Gastrocnemius medialis (tissue), 4 donors: ENCODE measurements at regions of chr4 and their contacts with region 1.

Region 1: GRCh38 chr4:159102622-159103383 is at the start of gene RAPGEF2:
- DNase-seq: peak; percentile 90 to 92
- ATAC-seq: peak; percentile 93
- H3K4me3 ChIP-seq: peak within 1 kb of the TSS; percentile 67 to 97 (median 93)
- H3K27ac ChIP-seq: peak within 1 kb of the TSS; percentile 93 to 96 (median 95)
- H3K4me1 ChIP-seq: peaks cover 35 to 43% of the 10 kb centered on the region in 2 donors
- H3K27me3 ChIP-seq: no peaks in the 10 kb centered on the region
- CTCF ChIP-seq: peak in 1 of 5 experiments; percentile 10
- POLR2A ChIP-seq: peak; percentile 95 to 98
- total RNA-seq, gene RAPGEF2: 32.9 to 42.3 (median 38.7) TPM

Region 2: DNA sequence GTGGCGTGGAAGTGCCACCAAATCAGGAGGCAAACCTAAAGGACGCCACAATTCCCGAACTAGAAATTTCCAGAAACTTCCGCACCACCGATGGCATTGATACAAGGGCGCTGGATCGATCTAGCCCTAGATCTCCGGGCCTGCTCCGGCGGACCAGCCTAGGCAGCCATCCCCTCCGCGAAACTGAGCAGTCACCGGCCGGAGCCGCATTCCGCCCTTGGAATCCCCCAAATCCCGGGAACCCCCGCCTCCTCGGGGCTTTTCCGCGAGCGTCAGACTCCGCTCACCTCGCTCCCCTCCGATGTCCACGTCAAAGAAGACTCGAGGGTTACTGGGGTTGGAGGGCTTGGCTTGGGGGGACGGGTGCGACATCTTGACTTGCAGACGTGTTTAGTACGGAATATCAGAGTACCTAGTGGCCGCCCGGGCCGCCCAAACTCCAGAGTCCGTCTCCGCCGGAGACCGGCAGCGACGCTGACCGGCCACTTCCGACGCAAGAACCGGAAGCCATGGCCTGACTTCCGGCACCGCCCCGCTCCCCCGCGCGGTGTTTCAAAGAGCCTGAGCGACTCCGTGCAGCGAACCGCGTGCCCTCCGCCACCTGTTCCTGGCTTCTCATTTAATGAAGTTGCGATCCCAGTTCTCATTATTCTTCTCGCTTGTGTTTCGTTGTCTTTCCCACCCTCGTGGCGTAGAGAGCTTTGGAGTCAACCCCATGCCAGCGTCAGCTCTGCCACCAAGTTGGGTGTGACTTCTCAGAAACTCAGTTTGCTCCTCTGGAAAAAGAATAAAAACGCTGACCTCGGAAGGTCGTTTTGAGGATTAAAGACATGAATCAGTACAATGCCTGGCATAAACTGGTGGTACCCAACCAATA is 379.6 kb before region 1 on chr4 and contains the start of gene PPID:
- in situ Hi-C with region 1: loop called in 1 of 4 experiments (anchors 10 kb)
- intact Hi-C with region 1: loop called (anchors 5 kb)
- DNase-seq: peak; percentile 68 to 81
- ATAC-seq: peak; percentile 92 to 95
- H3K4me3 ChIP-seq: peak within 1 kb of the TSS; percentile 72 to 95 (median 94)
- H3K27ac ChIP-seq: peak within 1 kb of the TSS; percentile 90 to 96 (median 92)
- H3K4me1 ChIP-seq: peaks cover 17 to 30% of the 10 kb centered on the region in 2 donors
- H3K27me3 ChIP-seq: no peaks in the 10 kb centered on the region
- CTCF ChIP-seq: no peak
- POLR2A ChIP-seq: peak; percentile 87
- total RNA-seq, gene PPID: 30.1 to 81.8 (median 40.6) TPM

Region 3: GRCh38 chr4:159141193-159141592 is 38.4 kb after region 1 on chr4:
- in situ Hi-C with region 1: no loop called
- intact Hi-C with region 1: loop called (anchors 2 kb)
- DNase-seq: no peak
- ATAC-seq: no peak
- H3K4me3 ChIP-seq: no peak overlapping the region
- H3K27ac ChIP-seq: no peak overlapping the region
- H3K4me1 ChIP-seq: peaks cover 83 to 90% of the 10 kb centered on the region in 2 donors
- H3K27me3 ChIP-seq: no peaks in the 10 kb centered on the region
- CTCF ChIP-seq: no peak
- POLR2A ChIP-seq: no peak

Region 4: GRCh38 chr4:159317203-159317602 is 214.4 kb after region 1 on chr4:
- in situ Hi-C with region 1: no loop called
- intact Hi-C with region 1: no loop called
- DNase-seq: no peak
- ATAC-seq: no peak
- H3K4me3 ChIP-seq: no peak overlapping the region
- H3K27ac ChIP-seq: no peak overlapping the region
- H3K4me1 ChIP-seq: peaks cover 0 to 3% of the 10 kb centered on the region in 2 donors
- H3K27me3 ChIP-seq: no peaks in the 10 kb centered on the region
- CTCF ChIP-seq: no peak
- POLR2A ChIP-seq: no peak